ENCODE measurements at regions of chr12 and their contacts with region 1.

Region 1: DNA sequence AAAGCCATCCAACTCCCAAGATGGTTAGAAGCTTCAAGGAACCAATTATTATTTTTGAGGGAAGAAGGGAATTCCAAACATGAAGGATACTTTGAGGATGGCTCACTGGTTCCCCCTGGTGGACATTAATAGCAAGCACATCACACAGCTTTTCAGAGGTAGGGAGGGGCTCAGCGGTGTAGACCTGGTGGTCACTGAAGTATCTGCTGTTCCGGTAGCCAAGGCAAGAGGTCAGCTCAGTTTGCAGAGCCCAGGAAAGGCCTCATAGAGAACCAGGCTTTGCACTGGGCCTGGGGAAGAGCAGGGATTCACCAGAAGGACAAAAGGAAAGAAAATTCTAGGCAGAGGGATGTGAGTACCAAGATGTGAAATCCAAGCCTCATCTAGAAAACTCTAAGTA is 118.7 kb downstream of the KSR2 start:
- DNase-seq: no peak
- ATAC-seq: peak in 1 of 8 donors; percentile 41
- H3K4me3 ChIP-seq: no peak overlapping the region
- H3K27ac ChIP-seq: no peak overlapping the region
- H3K4me1 ChIP-seq: no peaks in the 10 kb centered on the region
- H3K27me3 ChIP-seq: peaks cover 0 to 51% (median 33%) of the 10 kb centered on the region in 7 donors
- CTCF ChIP-seq: peak; percentile 65 to 88 (median 77)

Region 2: DNA sequence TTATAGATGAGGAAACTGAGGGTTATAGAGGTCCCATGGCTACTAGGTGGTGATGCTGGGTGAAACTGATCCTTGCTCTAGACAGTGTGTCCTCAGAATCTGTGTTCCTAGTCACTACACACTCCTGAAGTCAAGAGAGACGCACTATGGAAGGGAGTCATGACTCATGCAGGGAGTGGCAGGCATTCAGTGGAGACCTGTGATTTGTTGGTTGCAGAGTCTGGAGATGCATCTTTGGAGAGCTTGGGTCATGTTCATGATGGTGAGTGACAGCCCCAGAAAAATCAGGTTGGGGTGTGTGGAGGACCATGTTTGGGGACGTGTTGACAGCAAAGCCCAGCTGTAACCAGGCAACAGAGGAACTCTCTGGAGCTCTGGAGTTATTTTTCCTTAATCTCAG is 621.8 kb before region 1 on chr12:
- intact Hi-C with region 1: loop called in 1 of 10 experiments (anchors 5 kb)
- DNase-seq: no peak
- ATAC-seq: no peak
- H3K4me3 ChIP-seq: no peak overlapping the region
- H3K27ac ChIP-seq: no peak overlapping the region
- H3K4me1 ChIP-seq: no peaks in the 10 kb centered on the region
- H3K27me3 ChIP-seq: peaks cover 4 to 49% (median 29%) of the 10 kb centered on the region in 7 donors
- CTCF ChIP-seq: no peak